ENCODE measurements at regions of chr11 and their contacts with region 1.

Region 1: GRCh38 chr11:10540923-10541560 is at the start of gene RNF141:
- DNase-seq: peak; percentile 95 to 98
- ATAC-seq: peak; percentile 97 to 99 (median 98)
- H3K4me3 ChIP-seq: peak within 1 kb of the TSS; percentile 78
- H3K4me3 Mint-ChIP-seq: peak within 1 kb of the TSS; percentile 92
- H3K27ac ChIP-seq: peak within 1 kb of the TSS; percentile 84
- H3K27ac Mint-ChIP-seq: peak within 1 kb of the TSS; percentile 87 to 89
- H3K4me1 ChIP-seq: peaks cover 14% of the 10 kb centered on the region
- H3K4me1 Mint-ChIP-seq: peaks cover 18% of the 10 kb centered on the region in 2 donors
- H3K27me3 ChIP-seq: no peaks in the 10 kb centered on the region
- H3K27me3 Mint-ChIP-seq: peaks cover 2 to 7% of the 10 kb centered on the region in 2 donors
- CTCF ChIP-seq: peak; percentile 88
- total RNA-seq, gene RNF141: 10.3 to 13.9 (median 11.7) TPM

Region 2: GRCh38 chr11:9982800-9983579 is 558.1 kb before region 1 on chr11:
- intact Hi-C with region 1: no loop called
- DNase-seq: no peak
- ATAC-seq: no peak
- H3K4me3 ChIP-seq: no peak overlapping the region
- H3K4me3 Mint-ChIP-seq: no peak overlapping the region
- H3K27ac ChIP-seq: no peak overlapping the region
- H3K27ac Mint-ChIP-seq: no peak overlapping the region
- H3K4me1 ChIP-seq: no peaks in the 10 kb centered on the region
- H3K4me1 Mint-ChIP-seq: no peaks in the 10 kb centered on the region
- H3K27me3 ChIP-seq: no peaks in the 10 kb centered on the region
- H3K27me3 Mint-ChIP-seq: no peaks in the 10 kb centered on the region
- CTCF ChIP-seq: no peak

Region 3: DNA sequence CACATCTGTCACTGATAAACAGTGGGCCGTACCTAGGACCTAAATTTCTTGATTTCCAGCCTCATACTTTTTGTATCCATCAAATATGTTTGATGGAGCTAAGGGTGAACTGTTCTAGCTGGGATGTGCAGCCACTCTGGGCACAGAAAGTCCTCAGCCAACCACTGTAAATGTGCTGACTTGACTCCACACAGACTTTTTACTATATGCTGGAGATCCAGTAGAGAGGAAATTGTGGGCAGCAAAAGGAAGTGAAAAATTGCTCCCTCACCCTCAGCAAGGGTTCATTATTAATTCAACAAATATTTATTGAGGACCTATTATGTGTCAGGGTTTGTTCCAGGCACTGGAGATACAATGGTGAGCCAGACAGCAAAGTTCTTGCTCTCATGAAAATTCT is 140.2 kb before region 1 on chr11:
- intact Hi-C with region 1: no loop called
- DNase-seq: no peak
- ATAC-seq: no peak
- H3K4me3 ChIP-seq: no peak overlapping the region
- H3K4me3 Mint-ChIP-seq: no peak overlapping the region
- H3K27ac ChIP-seq: no peak overlapping the region
- H3K27ac Mint-ChIP-seq: no peak overlapping the region
- H3K4me1 ChIP-seq: peaks cover 12% of the 10 kb centered on the region
- H3K4me1 Mint-ChIP-seq: peaks cover 3 to 8% of the 10 kb centered on the region in 2 donors
- H3K27me3 ChIP-seq: no peaks in the 10 kb centered on the region
- H3K27me3 Mint-ChIP-seq: peaks cover 7 to 8% of the 10 kb centered on the region in 2 donors
- CTCF ChIP-seq: no peak

Region 4: GRCh38 chr11:10450464-10451425 is 90.3 kb before region 1 on chr11:
- intact Hi-C with region 1: loop called (anchors 5 kb)
- DNase-seq: peak; percentile 32 to 75
- ATAC-seq: peak; percentile 66 to 82 (median 74)
- H3K4me3 ChIP-seq: peak overlapping the region; percentile 37
- H3K4me3 Mint-ChIP-seq: peak overlapping the region; percentile 86
- H3K27ac ChIP-seq: peak overlapping the region; percentile 49
- H3K27ac Mint-ChIP-seq: peak overlapping the region in 1 of 2 donors; percentile 74
- H3K4me1 ChIP-seq: peaks cover 29% of the 10 kb centered on the region
- H3K4me1 Mint-ChIP-seq: peaks cover 29 to 43% of the 10 kb centered on the region in 2 donors
- H3K27me3 ChIP-seq: peaks cover 6% of the 10 kb centered on the region
- H3K27me3 Mint-ChIP-seq: peaks cover 29 to 39% of the 10 kb centered on the region in 2 donors
- CTCF ChIP-seq: peak; percentile 21

Region 5: DNA sequence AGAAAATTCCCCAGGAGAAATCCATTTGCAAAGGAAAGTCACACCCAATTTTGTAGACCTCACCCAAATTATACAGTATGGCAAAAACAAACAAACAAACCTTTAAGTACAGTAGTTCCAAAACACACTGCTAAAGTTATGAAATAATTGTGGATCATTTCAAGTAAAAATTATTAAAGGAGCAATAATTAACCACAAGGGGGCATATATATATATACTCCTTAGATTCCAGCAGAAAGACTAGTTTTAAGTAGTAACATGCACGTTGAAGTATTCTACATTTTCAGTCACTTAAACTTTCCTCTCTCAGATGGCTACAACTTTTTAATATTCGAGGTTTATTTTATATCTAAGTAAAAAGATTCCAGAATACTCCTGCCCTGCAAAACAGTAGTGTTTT is 26.8 kb before region 1 on chr11:
- intact Hi-C with region 1: no loop called
- DNase-seq: no peak
- ATAC-seq: no peak
- H3K4me3 ChIP-seq: no peak overlapping the region
- H3K4me3 Mint-ChIP-seq: no peak overlapping the region
- H3K27ac ChIP-seq: no peak overlapping the region
- H3K27ac Mint-ChIP-seq: no peak overlapping the region
- H3K4me1 ChIP-seq: no peaks in the 10 kb centered on the region
- H3K4me1 Mint-ChIP-seq: no peaks in the 10 kb centered on the region
- H3K27me3 ChIP-seq: no peaks in the 10 kb centered on the region
- H3K27me3 Mint-ChIP-seq: no peaks in the 10 kb centered on the region
- CTCF ChIP-seq: no peak